Psoas muscle (tissue), 8 donors: ENCODE measurements at regions of chr13 and their contacts with region 1.

Region 1: GRCh38 chr13:77779552-77780272 is 82.2 kb downstream of the SLAIN1 start:
- DNase-seq: no peak
- ATAC-seq: peak in 3 of 4 donors; percentile 38 to 64 (median 51)
- H3K4me3 ChIP-seq: no peak overlapping the region
- H3K27ac ChIP-seq: no peak overlapping the region
- H3K4me1 ChIP-seq: no peaks in the 10 kb centered on the region
- H3K27me3 ChIP-seq: no peaks in the 10 kb centered on the region
- CTCF ChIP-seq: peak; percentile 66

Region 2: GRCh38 chr13:78121459-78122348 is 342.0 kb after region 1 on chr13:
- intact Hi-C with region 1: loop called (anchors 1 to 5 kb)
- DNase-seq: peak in 1 of 2 donors; percentile 38
- ATAC-seq: peak in 2 of 4 donors; percentile 37 to 58
- H3K4me3 ChIP-seq: no peak overlapping the region
- H3K27ac ChIP-seq: no peak overlapping the region
- H3K4me1 ChIP-seq: no peaks in the 10 kb centered on the region
- H3K27me3 ChIP-seq: no peaks in the 10 kb centered on the region
- CTCF ChIP-seq: peak; percentile 84